ENCODE measurements at regions of chr15 and their contacts with region 1.

Region 1: DNA sequence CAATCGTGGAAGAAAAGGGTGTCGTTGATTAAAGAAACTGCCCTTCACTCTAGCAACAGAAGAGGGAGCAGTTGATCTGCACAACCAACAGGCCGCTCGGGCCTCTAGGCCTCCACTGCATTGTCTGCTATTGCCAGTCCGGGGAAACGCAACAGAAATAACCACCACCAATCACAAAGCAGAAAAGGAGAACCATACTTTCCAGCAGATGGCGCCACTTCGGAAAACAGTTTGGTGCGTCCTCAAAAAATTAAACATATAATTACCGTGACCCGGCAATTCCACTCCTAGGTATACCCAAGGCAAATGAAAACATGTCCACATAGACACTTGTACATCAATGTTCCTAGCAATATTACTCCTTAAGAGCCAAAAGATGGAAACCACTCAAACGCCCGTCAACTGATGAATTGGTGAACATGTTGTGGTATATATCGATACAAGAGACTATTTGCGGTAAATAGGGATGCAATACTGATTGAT is 154.1 kb downstream of the TJP1 start:
- DNase-seq: peak; percentile 95
- ATAC-seq: peak; percentile 56
- H3K4me3 ChIP-seq: no peak overlapping the region
- H3K27ac ChIP-seq: no peak overlapping the region
- H3K4me1 ChIP-seq: peaks cover 40% of the 10 kb centered on the region
- H3K27me3 ChIP-seq: no peaks in the 10 kb centered on the region
- CTCF ChIP-seq: peak; percentile 98

Region 2: GRCh38 chr15:29734917-29735572 is 66.9 kb after region 1 on chr15:
- CTCF ChIA-PET with region 1: no interaction called
- POLR2A ChIA-PET with region 1: no interaction called
- intact Hi-C with region 1: loop called (anchors 1 kb)
- DNase-seq: peak; percentile 77
- ATAC-seq: peak; percentile 69
- H3K4me3 ChIP-seq: no peak overlapping the region
- H3K27ac ChIP-seq: peak overlapping the region; percentile 58
- H3K4me1 ChIP-seq: peaks cover 53% of the 10 kb centered on the region
- H3K27me3 ChIP-seq: no peaks in the 10 kb centered on the region
- CTCF ChIP-seq: no peak

Region 3: DNA sequence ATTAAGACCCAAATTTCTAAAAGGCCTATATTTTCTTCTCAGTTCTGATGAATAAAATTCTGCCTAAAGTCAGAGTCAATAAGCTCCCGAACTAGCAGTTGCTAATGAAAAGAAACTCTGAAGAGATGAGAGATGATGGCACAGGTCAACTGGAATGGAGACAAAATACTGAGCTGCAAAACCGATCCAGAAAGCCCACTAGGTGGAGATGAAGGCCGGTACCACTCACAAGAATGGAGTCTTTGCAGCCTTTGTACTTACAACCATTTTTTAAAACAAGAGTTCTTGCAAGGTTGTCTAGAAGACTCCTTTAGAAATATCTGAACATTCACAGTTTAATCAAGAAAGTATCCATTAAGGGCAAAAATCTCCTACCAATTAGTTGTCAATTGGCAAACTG is 274.0 kb after region 1 on chr15:
- CTCF ChIA-PET with region 1: no interaction called
- POLR2A ChIA-PET with region 1: no interaction called
- intact Hi-C with region 1: loop called (anchors 1 kb)
- DNase-seq: peak; percentile 35
- ATAC-seq: no peak
- H3K4me3 ChIP-seq: no peak overlapping the region
- H3K27ac ChIP-seq: no peak overlapping the region
- H3K4me1 ChIP-seq: peaks cover 21% of the 10 kb centered on the region
- H3K27me3 ChIP-seq: no peaks in the 10 kb centered on the region
- CTCF ChIP-seq: peak; percentile 62

Region 4: DNA sequence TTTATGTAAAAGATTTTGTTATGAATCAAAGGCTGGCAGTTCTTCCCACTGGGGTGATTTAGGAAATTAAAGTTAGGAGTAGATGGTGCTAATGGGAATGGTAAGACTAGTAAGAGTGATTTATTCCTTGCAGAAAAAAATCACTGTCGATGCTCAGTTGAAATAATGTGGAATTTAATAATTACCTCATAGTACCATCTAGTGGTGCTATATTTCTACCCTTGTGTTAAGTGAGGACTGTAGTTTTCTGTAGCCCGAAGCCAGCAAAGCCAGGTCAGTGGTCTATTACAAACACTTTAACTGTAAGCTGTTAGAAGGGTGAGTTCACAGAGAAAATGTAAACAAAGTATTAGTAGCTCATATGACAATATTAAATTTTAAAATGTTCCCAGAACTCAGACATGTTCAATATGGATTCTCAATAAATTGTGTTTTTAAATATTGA is 375.1 kb after region 1 on chr15:
- CTCF ChIA-PET with region 1: interaction called, 3 read pairs
- POLR2A ChIA-PET with region 1: no interaction called
- intact Hi-C with region 1: loop called (anchors 1 kb)
- DNase-seq: peak; percentile 62
- ATAC-seq: peak; percentile 75
- H3K4me3 ChIP-seq: no peak overlapping the region
- H3K27ac ChIP-seq: no peak overlapping the region
- H3K4me1 ChIP-seq: no peaks in the 10 kb centered on the region
- H3K27me3 ChIP-seq: no peaks in the 10 kb centered on the region
- CTCF ChIP-seq: peak; percentile 67